ENCODE measurements at regions of chr4 and their contacts with region 1.

Region 1: DNA sequence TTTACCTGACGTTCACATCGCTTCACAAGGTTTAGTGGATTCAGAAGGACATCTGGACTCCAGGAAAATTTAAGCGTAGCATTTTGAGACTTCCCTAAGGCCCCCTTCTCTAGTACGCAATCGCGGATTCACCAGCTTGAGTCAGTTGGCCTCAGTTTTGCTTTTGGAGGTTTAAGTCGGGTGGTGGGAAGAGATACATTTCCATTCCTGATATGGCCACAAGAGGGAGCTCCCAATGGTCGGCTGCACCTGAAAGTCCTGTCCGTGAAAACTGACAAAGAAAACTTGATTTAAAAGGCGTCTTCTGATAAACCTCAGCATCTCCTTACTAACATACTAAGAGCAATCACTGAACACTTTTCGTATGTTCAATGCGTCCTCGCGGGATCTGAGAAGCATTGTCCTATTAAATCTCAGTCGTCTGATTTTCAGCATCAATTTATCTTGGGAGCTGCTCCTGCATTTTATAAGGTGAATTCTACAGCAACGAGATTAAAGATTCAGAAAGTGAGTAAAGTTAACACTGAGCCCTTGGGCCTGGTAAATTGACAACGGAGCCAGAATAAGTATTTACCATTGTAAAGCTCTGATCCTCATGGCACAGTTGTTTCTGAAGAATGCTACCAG is 50.6 kb downstream of the LGI2 start:
- DNase-seq: peak; percentile 30 to 51
- ATAC-seq: peak; percentile 47 to 80; a peak in 3 of 6 replicates
- H3K4me3 ChIP-seq: no peak overlapping the region
- H3K27ac ChIP-seq: no peak overlapping the region
- H3K4me1 ChIP-seq: no peaks in the 10 kb centered on the region
- CTCF ChIP-seq: peak; percentile 68
- EP300 ChIP-seq: no peak
- POLR2A ChIP-seq: no peak
- RAD21 ChIP-seq: peak; percentile 59 to 62

Region 2: DNA sequence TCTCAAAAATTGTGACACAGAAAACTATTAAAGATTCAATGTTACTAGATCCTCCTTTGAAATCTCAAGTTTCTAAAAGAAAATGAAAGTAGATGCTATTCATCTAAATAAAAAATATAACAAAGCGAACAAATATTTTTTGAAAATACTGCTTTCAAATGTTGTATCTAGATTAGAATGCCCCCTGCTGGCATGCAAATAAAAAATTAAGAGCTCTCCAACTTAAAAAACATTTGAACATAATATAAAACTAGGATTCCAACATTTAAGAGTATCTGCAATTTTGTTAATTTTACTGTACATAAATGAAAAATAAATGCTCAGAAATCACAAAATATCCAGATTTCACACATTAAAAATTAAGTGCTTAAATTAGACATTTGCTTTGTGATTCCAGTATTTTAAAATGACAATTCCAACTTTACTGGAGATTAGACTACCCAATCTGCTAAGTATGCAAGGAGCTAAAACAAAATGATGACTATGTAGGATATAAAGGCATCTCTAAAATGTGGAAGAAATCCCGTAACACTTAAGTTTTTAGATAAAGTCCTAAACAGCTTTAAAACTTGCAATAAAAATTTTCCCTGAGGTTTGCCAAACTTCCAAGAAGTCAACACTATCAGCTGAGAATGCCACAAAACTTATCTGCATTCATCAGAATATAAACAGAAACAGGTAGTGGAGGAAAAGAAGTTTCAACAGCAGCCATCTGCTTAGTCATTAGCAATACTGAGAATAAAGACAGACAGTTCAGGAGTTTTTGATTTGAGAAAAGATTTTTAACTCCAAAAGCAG is 428.5 kb before region 1 on chr4:
- CTCF ChIA-PET with region 1: no interaction called
- POLR2A ChIA-PET with region 1: no interaction called
- DNase-seq: no peak
- ATAC-seq: no peak
- H3K4me3 ChIP-seq: no peak overlapping the region
- H3K27ac ChIP-seq: no peak overlapping the region
- H3K4me1 ChIP-seq: peaks cover 50% of the 10 kb centered on the region
- CTCF ChIP-seq: peak; percentile 25; the same call in 2 of the 3 replicates
- EP300 ChIP-seq: no peak
- POLR2A ChIP-seq: no peak
- RAD21 ChIP-seq: 0 out of 5 replicates have a peak, but pooled peaks of 1 of the 2 experiments have one; percentile 13

Region 3: GRCh38 chr4:25144870-25145481 is 164.8 kb after region 1 on chr4:
- CTCF ChIA-PET with region 1: interaction called, 19 read pairs
- POLR2A ChIA-PET with region 1: no interaction called
- DNase-seq: peak; percentile 10 to 28
- ATAC-seq: no peak
- H3K4me3 ChIP-seq: no peak overlapping the region
- H3K27ac ChIP-seq: no peak overlapping the region
- H3K4me1 ChIP-seq: no peaks in the 10 kb centered on the region
- CTCF ChIP-seq: peak; percentile 62
- EP300 ChIP-seq: no peak
- POLR2A ChIP-seq: no peak
- RAD21 ChIP-seq: peak; percentile 53 to 56

Region 4: DNA sequence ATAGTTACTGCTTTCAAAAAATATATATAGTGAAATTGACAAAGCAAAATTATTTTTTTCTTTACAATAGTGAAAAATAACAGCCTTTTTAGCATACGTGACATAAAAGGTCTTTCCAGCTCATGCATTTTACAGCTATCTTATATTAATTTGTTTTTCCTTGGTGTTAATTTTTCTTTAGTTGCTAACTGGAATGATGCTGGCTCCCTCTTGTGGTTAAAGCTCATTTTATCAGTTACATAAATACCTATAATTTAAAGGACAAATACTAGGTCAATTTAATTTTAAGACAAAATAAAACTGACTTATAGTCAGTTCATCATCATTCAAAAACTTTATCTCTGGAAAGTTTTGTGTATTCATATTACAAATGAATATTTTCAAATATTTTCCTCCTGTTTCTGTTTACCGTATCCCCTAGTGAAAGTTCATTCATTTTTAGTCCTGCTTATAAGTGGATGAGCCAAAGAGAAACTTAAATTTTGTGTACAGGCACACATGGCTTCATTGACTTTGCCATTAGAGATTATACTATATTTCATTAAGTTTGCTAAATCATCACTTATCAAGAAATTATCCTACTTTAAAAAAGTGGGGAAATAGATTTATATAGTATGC is 386.9 kb after region 1 on chr4:
- CTCF ChIA-PET with region 1: interaction called, 12 read pairs
- POLR2A ChIA-PET with region 1: no interaction called
- DNase-seq: peak in 1 of 2 experiments; percentile 39
- ATAC-seq: no peak
- H3K4me3 ChIP-seq: no peak overlapping the region
- H3K27ac ChIP-seq: no peak overlapping the region
- H3K4me1 ChIP-seq: no peaks in the 10 kb centered on the region
- CTCF ChIP-seq: peak; percentile 68
- EP300 ChIP-seq: no peak
- POLR2A ChIP-seq: no peak
- RAD21 ChIP-seq: peak; percentile 63 to 75; a peak in 4 of 5 replicates

Measured in A549 (cell line).